Ascending aorta (tissue), 2 donors: ENCODE measurements at regions of chr14 and their contacts with region 1.

Region 1: GRCh38 chr14:105090493-105091053 is 25.3 kb upstream of the GPR132 start:
- DNase-seq: peak in 1 of 2 donors; percentile 93
- H3K4me3 ChIP-seq: no peak overlapping the region
- H3K27ac ChIP-seq: peak overlapping the region; percentile 90 to 95
- H3K4me1 ChIP-seq: peaks cover 22 to 45% of the 10 kb centered on the region in 2 donors
- H3K27me3 ChIP-seq: no peaks in the 10 kb centered on the region
- CTCF ChIP-seq: peak; percentile 87 to 95 (median 94)

Region 2: GRCh38 chr14:104976198-104977007 is 114.2 kb before region 1 on chr14:
- intact Hi-C with region 1: loop called (anchors 2 kb)
- DNase-seq: peak in 1 of 2 donors; percentile 90
- H3K4me3 ChIP-seq: peak overlapping the region in 1 of 2 donors; percentile 73
- H3K27ac ChIP-seq: peak overlapping the region; percentile 92 to 97
- H3K4me1 ChIP-seq: peaks cover 33 to 62% of the 10 kb centered on the region in 2 donors
- H3K27me3 ChIP-seq: no peaks in the 10 kb centered on the region
- CTCF ChIP-seq: peak; percentile 84 to 90 (median 87)

Region 3: GRCh38 chr14:105168979-105169507 is 78.5 kb after region 1 on chr14:
- intact Hi-C with region 1: loop called (anchors 2 kb)
- DNase-seq: no peak
- H3K4me3 ChIP-seq: peak overlapping the region in 1 of 2 donors; percentile 57
- H3K27ac ChIP-seq: no peak overlapping the region
- H3K4me1 ChIP-seq: peaks cover 7 to 26% of the 10 kb centered on the region in 2 donors
- H3K27me3 ChIP-seq: no peaks in the 10 kb centered on the region
- CTCF ChIP-seq: peak in 2 of 3 experiments; percentile 21 to 28

Region 4: GRCh38 chr14:105255021-105255507 is 164.5 kb after region 1 on chr14:
- intact Hi-C with region 1: loop called (anchors 10 kb)
- DNase-seq: no peak
- H3K4me3 ChIP-seq: no peak overlapping the region
- H3K27ac ChIP-seq: no peak overlapping the region
- H3K4me1 ChIP-seq: peaks cover 0 to 2% of the 10 kb centered on the region in 2 donors
- H3K27me3 ChIP-seq: no peaks in the 10 kb centered on the region
- CTCF ChIP-seq: no peak

Region 5: DNA sequence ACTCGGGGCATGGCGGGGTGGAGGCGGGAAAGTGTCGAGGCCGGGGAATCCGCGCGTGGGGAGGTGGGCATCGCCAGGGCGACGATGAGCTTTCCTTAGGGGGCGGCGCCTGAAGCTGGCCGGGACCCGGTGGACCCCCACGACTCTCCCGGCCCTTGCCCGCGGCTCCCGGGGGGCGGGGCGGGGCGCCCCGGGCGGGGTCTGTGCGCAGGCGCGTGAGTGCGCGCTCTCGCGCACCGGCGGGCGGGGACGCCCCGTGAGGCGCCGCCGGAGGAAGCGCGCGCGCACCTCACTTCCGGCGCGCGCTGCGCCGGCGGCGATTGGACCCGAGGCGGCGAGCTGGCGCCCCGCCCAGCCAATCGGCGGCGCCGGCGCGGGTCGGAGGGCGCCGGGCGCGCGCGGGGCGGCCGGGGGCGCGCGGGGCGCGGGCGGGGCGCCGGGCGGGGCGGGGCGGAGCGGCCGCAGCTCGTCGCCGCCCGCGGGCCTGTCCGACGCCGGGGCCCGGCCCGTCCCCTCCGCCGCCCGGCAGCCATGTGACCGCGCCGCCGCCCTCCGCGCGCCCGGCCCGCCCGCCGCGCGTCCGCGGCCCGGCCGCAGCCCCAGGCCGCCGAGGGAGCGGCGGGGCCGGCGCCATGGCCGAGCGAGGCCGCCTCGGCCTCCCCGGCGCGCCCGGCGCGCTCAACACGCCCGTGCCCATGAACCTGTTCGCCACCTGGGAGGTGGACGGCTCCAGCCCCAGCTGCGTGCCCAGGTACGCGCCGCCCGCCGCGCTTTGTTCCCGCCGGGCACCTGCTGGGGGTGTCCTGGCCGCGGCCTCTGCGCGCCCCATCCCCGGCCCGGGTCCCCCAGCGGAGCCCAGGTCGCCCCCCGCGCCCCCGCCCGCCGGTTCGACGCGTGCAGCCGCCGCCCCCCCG is 224.0 kb after region 1 on chr14 and contains the start of gene PACS2:
- intact Hi-C with region 1: loop called (anchors 1 kb)
- DNase-seq: peak in 1 of 2 donors; percentile 83
- H3K4me3 ChIP-seq: peak within 1 kb of the TSS; percentile 84 to 92
- H3K27ac ChIP-seq: peak within 1 kb of the TSS; percentile 94 to 97
- H3K4me1 ChIP-seq: peaks cover 4 to 15% of the 10 kb centered on the region in 2 donors
- H3K27me3 ChIP-seq: no peaks in the 10 kb centered on the region
- CTCF ChIP-seq: no peak
- total RNA-seq, gene PACS2: 153 TPM

Region 6: GRCh38 chr14:105473677-105474482 is 383.3 kb after region 1 on chr14:
- intact Hi-C with region 1: loop called (anchors 5 kb)
- DNase-seq: peak; percentile 87 to 98
- H3K4me3 ChIP-seq: peak overlapping the region; percentile 65 to 78
- H3K27ac ChIP-seq: peak overlapping the region; percentile 86 to 96
- H3K4me1 ChIP-seq: peaks cover 21 to 45% of the 10 kb centered on the region in 2 donors
- H3K27me3 ChIP-seq: no peaks in the 10 kb centered on the region
- CTCF ChIP-seq: no peak

Region 7: DNA sequence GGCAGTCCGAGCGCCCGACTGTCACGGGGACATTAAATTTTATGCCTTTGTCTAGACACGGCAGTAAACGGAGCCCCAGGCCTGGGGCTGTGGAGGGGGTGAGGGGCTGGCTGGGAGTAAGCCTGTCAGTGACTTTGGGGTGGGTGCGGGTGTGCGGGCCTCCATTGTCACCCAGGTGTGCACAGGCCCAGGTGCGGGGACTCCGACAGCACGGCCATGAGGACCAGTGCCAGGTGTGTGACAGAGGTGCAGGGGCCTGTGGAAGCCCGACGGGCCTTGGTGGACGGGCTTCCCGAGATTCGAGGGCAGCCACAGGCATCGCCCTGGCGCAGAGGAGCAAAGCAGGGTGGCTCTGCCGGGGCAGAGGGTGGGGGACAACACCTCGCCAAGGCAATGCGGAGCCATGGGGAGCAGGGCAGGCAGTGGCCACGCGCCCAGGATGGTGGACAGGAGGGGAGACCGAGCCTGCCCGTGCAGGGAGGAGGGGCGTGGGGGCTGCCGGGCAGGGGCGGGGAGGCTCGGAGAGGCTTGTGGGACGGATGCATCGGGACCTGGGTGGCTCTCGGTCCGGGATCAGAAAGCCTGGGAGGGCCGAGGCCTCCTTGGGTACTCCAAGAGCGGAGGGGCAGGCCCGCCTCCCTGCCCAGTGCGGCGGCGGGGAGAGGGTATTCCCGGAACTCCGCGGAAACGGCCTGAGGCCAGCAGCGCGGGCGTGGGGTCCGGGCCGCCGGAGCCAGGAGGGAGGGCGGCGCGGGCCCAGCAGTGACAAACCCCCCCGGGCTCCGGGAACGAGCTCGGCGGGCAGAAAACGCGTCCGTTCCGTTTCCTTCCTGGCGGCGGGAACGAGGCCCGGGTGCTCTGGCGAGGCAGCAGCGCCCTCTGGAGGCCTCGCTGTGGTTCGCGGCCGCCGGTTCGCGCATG is 437.3 kb after region 1 on chr14:
- intact Hi-C with region 1: loop called (anchors 5 kb)
- DNase-seq: peak in 1 of 2 donors; percentile 87
- H3K4me3 ChIP-seq: peak overlapping the region; percentile 69 to 91
- H3K27ac ChIP-seq: peak overlapping the region in 1 of 2 donors; percentile 53
- H3K4me1 ChIP-seq: peaks cover 12 to 21% of the 10 kb centered on the region in 2 donors
- H3K27me3 ChIP-seq: no peaks in the 10 kb centered on the region
- CTCF ChIP-seq: peak; percentile 83 to 90 (median 90)